MCF 10A (cell line): ENCODE measurements at regions of chr20 and their contacts with region 1.

Region 1: DNA sequence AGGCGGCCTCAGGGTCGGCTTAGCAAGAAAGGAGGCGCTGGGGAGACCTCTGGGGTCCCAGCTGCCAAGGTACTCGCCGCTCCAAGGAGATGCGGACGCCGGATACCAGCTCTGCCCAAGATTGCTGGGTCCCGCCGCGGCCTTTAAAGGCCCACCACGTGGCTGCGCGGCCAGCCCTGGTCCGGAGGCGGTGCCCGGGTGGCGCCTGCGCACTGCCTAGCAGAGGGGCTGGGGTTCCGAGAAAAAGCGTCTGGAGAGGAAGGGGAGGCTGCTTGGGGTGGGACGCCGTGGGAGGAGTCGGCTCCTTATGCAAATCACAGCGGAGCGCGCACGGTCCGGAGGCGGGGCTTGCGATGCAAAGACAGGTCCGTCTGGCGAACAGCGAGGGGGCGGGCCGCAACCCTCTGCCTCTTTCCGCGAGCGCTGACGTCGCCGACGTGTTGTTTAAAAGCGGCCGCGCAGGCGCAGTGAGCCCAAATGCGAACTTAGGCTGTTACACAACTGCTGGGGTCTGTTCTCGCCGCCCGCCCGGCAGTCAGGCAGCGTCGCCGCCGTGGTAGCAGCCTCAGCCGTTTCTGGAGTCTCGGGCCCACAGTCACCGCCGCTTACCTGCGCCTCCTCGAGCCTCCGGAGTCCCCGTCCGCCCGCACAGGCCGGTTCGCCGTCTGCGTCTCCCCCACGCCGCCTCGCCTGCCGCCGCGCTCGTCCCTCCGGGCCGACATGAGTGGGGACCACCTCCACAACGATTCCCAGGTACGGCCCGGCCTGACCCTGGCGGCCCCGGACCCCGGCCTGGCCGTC is at the start of gene TOP1:
- DNase-seq: peak; percentile 99
- H3K4me3 Mint-ChIP-seq: peak within 1 kb of the TSS; percentile 94
- H3K27ac Mint-ChIP-seq: peak within 1 kb of the TSS; percentile 100
- H3K4me1 Mint-ChIP-seq: peaks cover 41% of the 10 kb centered on the region
- H3K27me3 Mint-ChIP-seq: no peaks in the 10 kb centered on the region
- CTCF ChIP-seq: no peak
- total RNA-seq, gene TOP1: 141 and 174 TPM in 2 replicates

Region 2: DNA sequence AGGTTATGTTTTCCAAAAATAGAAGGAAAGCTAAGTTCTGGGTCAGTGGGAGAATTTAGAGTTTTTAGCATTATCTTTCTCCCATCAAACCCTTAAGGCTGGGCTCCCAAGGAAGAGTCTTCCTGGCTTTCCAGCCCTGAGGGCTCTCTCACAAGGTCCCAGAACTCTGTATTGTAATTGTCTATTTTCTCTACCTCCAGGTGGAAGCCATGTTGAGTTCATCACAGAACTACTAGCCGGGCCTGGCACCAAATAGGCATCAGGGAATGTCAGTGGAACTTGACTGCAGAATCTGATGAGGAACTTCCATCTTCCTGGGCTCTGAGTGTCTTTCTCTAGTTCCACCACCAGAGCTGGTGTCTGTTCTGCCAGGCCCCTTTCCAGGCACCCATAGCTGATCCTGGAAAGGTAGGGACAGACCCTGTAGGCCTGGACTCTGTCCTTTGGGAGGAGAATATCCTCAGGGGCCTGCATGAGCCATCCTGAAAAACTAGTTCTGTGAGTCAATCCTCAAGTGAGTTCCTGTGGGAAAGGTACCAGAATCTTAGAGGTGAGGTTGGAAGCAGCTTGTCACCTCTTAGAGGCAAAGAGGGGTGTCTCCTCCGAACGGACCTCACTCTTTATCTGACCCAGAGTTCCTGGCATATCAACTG is 11.0 kb before region 1 on chr20:
- CTCF ChIA-PET with region 1: interaction called, 4 read pairs
- POLR2A ChIA-PET with region 1: interaction called, 11 read pairs
- intact Hi-C with region 1: no loop called
- DNase-seq: no peak
- H3K4me3 Mint-ChIP-seq: no peak overlapping the region
- H3K27ac Mint-ChIP-seq: no peak overlapping the region
- H3K4me1 Mint-ChIP-seq: peaks cover 18% of the 10 kb centered on the region
- H3K27me3 Mint-ChIP-seq: no peaks in the 10 kb centered on the region
- CTCF ChIP-seq: no peak

Region 3: GRCh38 chr20:41047975-41048305 is 19.4 kb after region 1 on chr20:
- CTCF ChIA-PET with region 1: interaction called, 15 read pairs
- POLR2A ChIA-PET with region 1: interaction called, 313 read pairs
- intact Hi-C with region 1: no loop called
- DNase-seq: peak; percentile 39
- H3K4me3 Mint-ChIP-seq: peak overlapping the region; percentile 73
- H3K27ac Mint-ChIP-seq: peak overlapping the region; percentile 5
- H3K4me1 Mint-ChIP-seq: peaks cover 66% of the 10 kb centered on the region
- H3K27me3 Mint-ChIP-seq: no peaks in the 10 kb centered on the region
- CTCF ChIP-seq: no peak

Region 4: DNA sequence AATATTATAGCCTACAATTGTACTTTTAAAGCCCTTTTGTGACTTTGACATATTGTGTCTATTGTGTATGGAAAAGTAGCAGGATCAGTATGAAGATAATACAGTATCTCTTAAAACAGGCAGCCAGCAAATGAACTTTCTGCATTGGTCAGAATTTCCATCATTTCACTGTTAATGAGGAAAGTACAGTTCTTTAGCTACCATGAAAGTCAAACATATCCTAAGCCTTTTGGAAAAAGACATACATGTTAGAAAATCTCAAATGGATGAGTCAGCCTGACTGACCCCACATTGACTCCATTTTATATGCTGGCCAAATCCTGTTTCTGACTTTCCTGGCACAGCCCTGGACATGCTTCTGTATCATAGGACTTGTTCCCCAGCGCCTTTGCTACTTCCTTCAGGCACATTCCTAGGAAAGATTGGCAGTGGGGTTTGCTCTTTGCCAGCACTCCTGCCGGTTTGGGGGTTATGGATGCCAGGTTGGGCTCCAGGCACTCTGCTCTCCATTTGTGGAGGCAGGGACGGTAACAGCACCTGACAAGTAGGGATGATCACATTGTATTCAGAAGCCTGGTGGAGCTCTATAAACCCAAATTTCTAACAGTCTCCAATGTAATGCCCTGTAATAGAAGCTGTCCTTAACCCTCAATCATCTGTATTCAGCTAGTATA is 43.8 kb after region 1 on chr20:
- CTCF ChIA-PET with region 1: interaction called, 9 read pairs
- POLR2A ChIA-PET with region 1: interaction called, 24 read pairs
- intact Hi-C with region 1: loop called (anchors 5 kb)
- DNase-seq: peak; percentile 82
- H3K4me3 Mint-ChIP-seq: no peak overlapping the region
- H3K27ac Mint-ChIP-seq: peak overlapping the region; percentile 43
- H3K4me1 Mint-ChIP-seq: peaks cover 27% of the 10 kb centered on the region
- H3K27me3 Mint-ChIP-seq: no peaks in the 10 kb centered on the region
- CTCF ChIP-seq: no peak

Region 5: GRCh38 chr20:41078329-41078728 is 49.8 kb after region 1 on chr20:
- CTCF ChIA-PET with region 1: interaction called, 9 read pairs
- POLR2A ChIA-PET with region 1: interaction called, 24 read pairs
- intact Hi-C with region 1: loop called (anchors 5 kb)
- DNase-seq: peak; percentile 50
- H3K4me3 Mint-ChIP-seq: no peak overlapping the region
- H3K27ac Mint-ChIP-seq: peak overlapping the region; percentile 24
- H3K4me1 Mint-ChIP-seq: peaks cover 22% of the 10 kb centered on the region
- H3K27me3 Mint-ChIP-seq: no peaks in the 10 kb centered on the region
- CTCF ChIP-seq: peak; percentile 32

Region 6: DNA sequence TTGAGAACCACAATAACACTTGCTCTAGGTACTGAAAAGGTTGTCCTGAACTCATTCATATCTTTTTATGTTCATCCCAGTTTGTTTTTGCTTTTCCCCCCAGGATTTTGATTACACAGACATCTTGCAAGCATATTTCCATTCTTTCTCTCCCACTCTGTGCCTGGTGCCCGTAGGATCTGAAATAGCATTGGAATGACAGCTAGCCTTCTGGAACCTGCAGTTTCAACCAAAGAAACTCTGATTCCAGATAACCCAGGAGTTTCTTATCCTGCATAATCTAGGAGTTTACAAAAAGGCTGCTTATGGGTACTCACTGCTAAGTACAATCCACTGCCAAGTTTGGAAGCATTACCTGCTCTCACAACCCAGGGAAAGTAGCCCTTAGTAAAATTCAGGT is 80.0 kb after region 1 on chr20:
- CTCF ChIA-PET with region 1: no interaction called
- POLR2A ChIA-PET with region 1: no interaction called
- intact Hi-C with region 1: no loop called
- DNase-seq: no peak
- H3K4me3 Mint-ChIP-seq: no peak overlapping the region
- H3K27ac Mint-ChIP-seq: no peak overlapping the region
- H3K4me1 Mint-ChIP-seq: peaks cover 5% of the 10 kb centered on the region
- H3K27me3 Mint-ChIP-seq: no peaks in the 10 kb centered on the region
- CTCF ChIP-seq: no peak

Region 7: DNA sequence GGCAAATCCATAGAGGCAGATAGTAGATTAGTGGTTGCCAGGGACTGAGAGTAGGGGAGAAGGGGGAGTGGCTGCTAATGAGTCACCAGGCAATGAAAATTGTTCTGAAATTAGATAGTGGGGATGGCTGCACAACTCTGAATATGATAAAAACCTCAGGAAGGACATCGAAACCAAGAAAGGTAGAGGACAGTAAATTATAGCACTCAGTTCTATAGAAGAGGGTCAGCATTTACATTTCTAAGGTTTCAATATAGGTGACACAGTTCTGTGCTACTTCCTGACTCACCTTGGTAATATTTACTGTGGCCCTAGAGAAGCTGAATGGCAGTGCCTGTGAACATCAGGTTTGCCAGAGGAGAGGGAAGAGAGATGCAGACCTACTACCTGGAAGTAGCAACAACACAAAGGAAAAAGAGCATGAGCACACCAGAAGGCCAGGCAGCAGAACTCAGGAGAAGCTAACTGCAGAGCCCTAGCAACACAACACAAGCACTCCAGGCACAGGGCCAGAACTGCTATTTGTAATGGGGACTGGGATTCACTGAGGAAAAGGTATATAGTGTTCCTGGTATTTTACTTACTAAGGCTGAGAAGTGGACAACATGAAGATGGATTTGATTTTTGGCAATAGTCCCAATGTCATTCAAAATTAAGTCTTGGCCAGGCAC is 184.7 kb after region 1 on chr20:
- CTCF ChIA-PET with region 1: no interaction called
- POLR2A ChIA-PET with region 1: no interaction called
- intact Hi-C with region 1: no loop called
- DNase-seq: peak; percentile 24
- H3K4me3 Mint-ChIP-seq: no peak overlapping the region
- H3K27ac Mint-ChIP-seq: no peak overlapping the region
- H3K4me1 Mint-ChIP-seq: peaks cover 11% of the 10 kb centered on the region
- H3K27me3 Mint-ChIP-seq: no peaks in the 10 kb centered on the region
- CTCF ChIP-seq: no peak